ENCODE measurements at regions of chr7 and their contacts with region 1.

Region 1: GRCh38 chr7:139359366-139360209 is at the start of gene LUC7L2:
- DNase-seq: peak; percentile 97

Region 2: GRCh38 chr7:139328375-139328774 is 31.2 kb before region 1 on chr7:
- CTCF ChIA-PET with region 1: no interaction called
- POLR2A ChIA-PET with region 1: interaction called, 10 read pairs
- DNase-seq: no peak

Region 3: DNA sequence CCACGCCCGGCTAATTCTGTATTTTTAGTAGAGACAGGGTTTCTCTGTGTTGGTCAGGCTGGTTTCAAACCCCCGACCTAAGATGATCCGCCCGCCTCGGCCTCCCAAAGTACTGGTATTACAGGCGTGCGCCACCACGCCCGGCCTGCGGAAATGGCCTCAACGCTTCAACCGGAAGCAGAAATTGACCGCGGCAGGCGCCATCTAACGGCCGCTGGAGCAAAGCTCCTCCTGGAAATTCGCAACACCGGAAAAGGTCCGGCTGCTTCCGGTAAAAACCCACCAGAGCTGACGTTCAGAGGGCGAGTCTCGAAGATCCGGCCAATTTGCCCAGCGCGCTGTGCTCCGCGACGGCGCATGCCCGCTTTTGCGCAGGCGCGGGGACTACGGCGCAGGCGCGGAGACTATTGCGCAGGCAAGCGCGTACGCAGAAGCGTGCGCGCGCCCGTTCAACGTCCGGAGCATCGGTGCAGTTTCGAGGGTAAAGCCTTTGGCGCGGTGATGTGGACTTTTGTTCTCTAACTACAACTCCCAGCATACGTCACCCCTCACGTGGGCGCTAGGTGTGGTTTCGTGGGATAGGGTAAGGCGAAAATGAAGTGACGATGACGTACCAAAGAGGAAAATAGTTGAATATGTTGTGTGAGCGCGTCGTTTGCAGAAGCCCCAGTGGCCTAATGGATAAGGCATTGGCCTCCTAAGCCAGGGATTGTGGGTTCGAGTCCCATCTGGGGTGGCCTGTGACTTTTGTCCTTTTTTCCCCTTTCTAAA is 19.4 kb before region 1 on chr7:
- CTCF ChIA-PET with region 1: interaction called, 4 read pairs
- POLR2A ChIA-PET with region 1: interaction called, 15 read pairs
- DNase-seq: peak; percentile 98

Region 4: DNA sequence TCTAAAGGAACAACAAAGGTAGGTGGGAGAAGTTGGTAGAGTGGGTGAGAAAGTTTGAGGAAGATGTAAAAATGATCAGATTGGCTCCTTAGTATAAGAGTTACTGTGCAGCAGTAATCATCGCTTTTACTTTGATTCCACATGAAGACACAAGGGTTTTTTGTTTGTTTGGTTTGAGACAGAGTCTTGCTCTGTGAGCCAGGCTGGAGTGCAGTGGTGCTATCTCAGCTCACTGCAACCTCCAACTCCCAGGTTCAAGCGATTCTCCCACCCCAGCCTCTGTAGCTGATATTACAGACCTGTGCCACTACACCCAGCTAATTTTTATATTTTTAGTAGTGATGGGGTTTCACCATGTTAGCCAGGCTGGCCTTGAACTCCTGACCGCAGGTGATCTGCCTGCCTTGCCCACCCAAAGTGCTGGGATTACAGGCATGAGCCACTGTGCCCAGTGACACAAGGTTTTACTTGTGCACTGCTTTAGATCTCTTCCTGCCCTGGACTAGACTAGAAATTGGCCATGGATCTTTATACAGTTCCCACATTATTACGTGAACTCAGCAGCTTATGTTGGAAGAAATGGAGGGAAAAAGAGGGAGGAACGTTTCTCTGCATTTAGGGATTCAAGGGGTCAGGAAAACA is 10.8 kb after region 1 on chr7:
- CTCF ChIA-PET with region 1: interaction called, 3 read pairs
- POLR2A ChIA-PET with region 1: interaction called, 31 read pairs
- DNase-seq: no peak